ENCODE measurements at regions of chr1 and their contacts with region 1.

Region 1: DNA sequence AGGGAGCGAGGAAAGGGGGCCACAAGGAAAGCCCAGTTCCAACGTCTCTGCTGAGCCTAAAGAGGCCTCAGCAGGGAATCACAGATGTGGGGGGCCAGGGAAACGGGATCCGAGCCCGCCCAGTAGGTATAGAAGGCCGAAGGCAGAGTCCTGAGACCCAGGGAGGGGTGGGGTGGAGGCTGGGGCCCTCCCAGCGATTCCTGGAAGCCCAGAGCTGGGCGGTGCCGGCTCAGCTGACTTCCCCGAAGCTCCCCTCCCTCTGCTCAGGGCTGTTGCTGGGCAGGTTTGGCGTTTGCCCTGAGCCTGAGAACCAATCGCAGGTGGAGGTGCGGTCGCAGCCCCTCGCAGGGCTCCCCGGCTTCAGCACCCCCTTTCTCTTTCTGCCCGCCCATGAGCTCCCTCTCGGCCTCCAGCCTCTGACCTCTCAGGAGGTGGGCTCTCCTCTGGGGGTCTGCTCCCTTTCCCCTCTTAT is 12.8 kb downstream of the ADAMTSL4 start:
- DNase-seq: peak; percentile 82 to 95 (median 88)
- ATAC-seq: peak; percentile 83
- H3K4me3 ChIP-seq: peak overlapping the region; percentile 26
- H3K27ac ChIP-seq: peak overlapping the region; percentile 81
- H3K4me1 ChIP-seq: peaks cover 39 to 69% of the 10 kb centered on the region in 2 experiments
- H3K27me3 ChIP-seq: no peaks in the 10 kb centered on the region
- CTCF ChIP-seq: no peak
- EP300 ChIP-seq: 0 out of 2 replicates have a peak, but pooled peaks have one; percentile 35
- POLR2A ChIP-seq: peak; percentile 32; the same call in 1 of the 2 replicates
- RAD21 ChIP-seq: no peak

Region 2: GRCh38 chr1:150548632-150549495 is 13.1 kb before region 1 on chr1 and contains the start of gene ADAMTSL4:
- CTCF ChIA-PET with region 1: interaction called, 3 read pairs
- POLR2A ChIA-PET with region 1: interaction called, 21 read pairs
- in situ Hi-C with region 1: no loop called
- intact Hi-C with region 1: no loop called
- DNase-seq: peak; percentile 84 to 94 (median 90)
- ATAC-seq: peak; percentile 54
- H3K4me3 ChIP-seq: peak within 1 kb of the TSS; percentile 75
- H3K27ac ChIP-seq: peak within 1 kb of the TSS; percentile 87
- H3K4me1 ChIP-seq: peaks cover 53 to 84% of the 10 kb centered on the region in 2 experiments
- H3K27me3 ChIP-seq: no peaks in the 10 kb centered on the region
- CTCF ChIP-seq: peak in 2 of 3 experiments; percentile 3; a peak in 2 of 6 replicates
- EP300 ChIP-seq: no peak
- POLR2A ChIP-seq: peak; percentile 70
- RAD21 ChIP-seq: peak in 1 of 2 experiments; percentile 9; a peak in 1 of 4 replicates
- polyA plus RNA-seq, gene ADAMTSL4: 12.7 to 14.8 TPM

Region 3: GRCh38 chr1:150621497-150622302 is 59.7 kb after region 1 on chr1:
- CTCF ChIA-PET with region 1: interaction called, 6 read pairs
- POLR2A ChIA-PET with region 1: interaction called, 4 read pairs
- in situ Hi-C with region 1: no loop called
- intact Hi-C with region 1: loop called (anchors 1 kb)
- DNase-seq: peak in 3 of 4 experiments; percentile 26 to 54 (median 31)
- ATAC-seq: no peak
- H3K4me3 ChIP-seq: no peak overlapping the region
- H3K27ac ChIP-seq: peak overlapping the region; percentile 59
- H3K4me1 ChIP-seq: peaks cover 31 to 44% of the 10 kb centered on the region in 2 experiments
- H3K27me3 ChIP-seq: no peaks in the 10 kb centered on the region
- CTCF ChIP-seq: peak; percentile 52 to 74 (median 71)
- EP300 ChIP-seq: no peak
- POLR2A ChIP-seq: 0 out of 2 replicates have a peak, but pooled peaks have one; percentile 28
- RAD21 ChIP-seq: peak; percentile 41 to 58

Region 4: GRCh38 chr1:150696590-150697524 is 134.8 kb after region 1 on chr1 and contains the start of gene GOLPH3L:
- CTCF ChIA-PET with region 1: no interaction called
- POLR2A ChIA-PET with region 1: interaction called, 3 read pairs
- in situ Hi-C with region 1: no loop called
- intact Hi-C with region 1: loop called (anchors 2 kb)
- DNase-seq: peak; percentile 95 to 99 (median 97)
- ATAC-seq: peak; percentile 99
- H3K4me3 ChIP-seq: peak within 1 kb of the TSS; percentile 55
- H3K27ac ChIP-seq: peak within 1 kb of the TSS; percentile 65
- H3K4me1 ChIP-seq: no peaks in the 10 kb centered on the region; a peak in 1 of 5 replicates
- H3K27me3 ChIP-seq: no peaks in the 10 kb centered on the region
- CTCF ChIP-seq: peak in 1 of 3 experiments; percentile 1; a peak in 1 of 6 replicates
- EP300 ChIP-seq: no peak
- POLR2A ChIP-seq: peak; percentile 76
- RAD21 ChIP-seq: no peak
- polyA plus RNA-seq, gene GOLPH3L: 16.8 to 21.9 TPM

Region 5: DNA sequence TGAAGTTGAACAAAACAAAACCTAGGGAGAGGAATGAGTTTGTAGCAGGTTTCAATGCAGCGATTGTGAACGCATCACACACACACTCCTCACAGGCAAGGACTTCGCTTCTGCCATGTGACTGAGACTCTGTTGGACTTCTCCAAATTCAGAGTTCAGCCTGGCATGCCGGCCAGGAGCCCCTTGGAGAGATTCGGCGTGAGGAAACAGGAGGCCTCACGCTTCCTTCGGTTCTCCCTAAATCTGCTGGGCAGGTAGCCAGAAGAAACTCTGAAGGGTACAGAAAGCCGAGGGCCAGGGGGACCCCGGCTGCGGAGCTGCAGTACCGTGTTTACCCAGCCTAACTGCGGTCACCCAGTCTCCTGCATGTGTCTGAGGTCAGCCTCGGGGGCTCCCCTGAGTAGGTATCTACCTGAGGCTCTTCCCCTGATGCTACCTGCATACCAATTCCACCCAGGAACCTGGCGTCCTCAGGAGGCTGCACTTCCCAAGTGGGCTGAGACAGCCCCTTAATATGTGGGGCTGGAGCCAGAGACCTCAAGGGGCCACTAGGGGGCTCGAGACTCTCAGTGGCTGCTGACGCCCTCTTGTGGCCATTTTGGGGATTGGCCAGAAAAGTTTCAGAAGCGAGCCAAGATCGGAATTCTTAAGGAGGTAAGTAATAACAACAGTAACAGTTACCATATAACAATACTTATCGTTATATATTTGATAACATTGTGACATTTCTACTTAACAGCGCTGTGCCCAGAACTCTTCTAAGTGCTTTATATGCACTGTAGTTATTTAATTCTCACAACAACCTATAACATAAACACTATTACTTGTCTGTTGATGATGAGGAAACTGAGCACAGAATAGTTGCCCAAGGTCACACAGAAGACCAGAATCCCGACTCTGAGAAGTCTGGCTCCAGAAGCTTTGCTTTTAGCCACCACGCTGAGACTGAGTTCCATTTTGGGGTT is 417.4 kb after region 1 on chr1:
- CTCF ChIA-PET with region 1: no interaction called
- POLR2A ChIA-PET with region 1: interaction called, 3 read pairs
- in situ Hi-C with region 1: no loop called
- intact Hi-C with region 1: loop called (anchors 5 kb)
- DNase-seq: peak; percentile 78 to 95 (median 84)
- ATAC-seq: peak; percentile 57
- H3K4me3 ChIP-seq: peak overlapping the region; percentile 7; the same call in 1 of the 2 replicates
- H3K27ac ChIP-seq: peak overlapping the region; percentile 79
- H3K4me1 ChIP-seq: peaks cover 44 to 56% of the 10 kb centered on the region in 2 experiments
- H3K27me3 ChIP-seq: no peaks in the 10 kb centered on the region
- CTCF ChIP-seq: peak; percentile 100
- EP300 ChIP-seq: peak; percentile 54; the same call in 1 of the 2 replicates
- POLR2A ChIP-seq: 0 out of 2 replicates have a peak, but pooled peaks have one; percentile 34
- RAD21 ChIP-seq: peak; percentile 89 to 94

Measured in K562 (cell line).